CD4-positive, alpha-beta memory T cell (primary cell): ENCODE measurements at regions of chr3 and their contacts with region 1.

Region 1: DNA sequence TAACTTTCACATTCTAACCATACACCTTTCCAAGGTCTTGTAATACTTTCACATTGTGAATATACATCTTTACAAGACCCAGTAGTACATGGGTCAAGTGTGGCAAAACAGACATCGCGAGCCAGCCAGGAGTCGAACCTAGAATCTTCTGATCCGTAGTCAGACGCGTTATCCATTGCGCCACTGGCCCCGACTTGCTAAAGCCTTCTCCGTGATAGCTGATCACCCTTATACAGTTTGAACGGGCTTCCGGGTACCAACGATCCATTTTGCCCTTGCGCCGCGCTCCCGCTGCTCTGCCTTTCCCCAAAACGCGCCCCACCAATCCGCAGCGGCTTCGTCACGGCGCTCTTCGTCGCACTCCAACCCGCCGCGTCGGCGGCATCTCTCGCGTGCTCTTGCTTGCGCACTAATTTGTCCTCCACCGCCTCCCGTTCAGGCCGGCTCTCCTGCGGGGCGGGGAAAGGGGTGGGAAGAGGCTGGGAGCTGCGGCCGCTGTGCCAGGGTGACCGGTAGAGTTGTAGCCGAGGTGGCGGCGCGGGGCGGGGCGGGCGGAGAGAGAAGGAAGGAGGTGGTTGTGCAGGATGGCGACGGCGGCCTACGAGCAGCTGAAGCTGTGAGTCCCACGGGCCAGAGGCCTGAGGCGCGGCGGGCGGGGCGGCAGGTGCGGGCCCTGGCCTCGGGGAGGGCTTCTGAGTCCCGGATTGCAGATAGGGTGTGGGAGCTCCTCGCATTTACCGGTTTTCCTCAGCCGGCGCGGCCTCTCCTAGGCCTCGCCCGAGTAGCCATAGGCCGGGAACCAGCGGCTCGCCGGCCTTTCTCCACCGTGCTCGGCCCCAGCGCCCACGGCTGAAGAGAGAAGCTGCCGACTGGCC is at the start of gene SACM1L:
- DNase-seq: peak; percentile 96 to 97 (median 97)
- H3K4me3 ChIP-seq: peak within 1 kb of the TSS; percentile 84 to 97
- H3K4me3 Mint-ChIP-seq: peak within 1 kb of the TSS; percentile 86 to 99 (median 93)
- H3K27ac ChIP-seq: peak within 1 kb of the TSS; percentile 94
- H3K27ac Mint-ChIP-seq: peak within 1 kb of the TSS; percentile 91 to 100 (median 99)
- H3K4me1 ChIP-seq: peaks cover 47% of the 10 kb centered on the region
- H3K4me1 Mint-ChIP-seq: peaks cover 41 to 67% (median 56%) of the 10 kb centered on the region in 4 donors
- H3K27me3 ChIP-seq: no peaks in the 10 kb centered on the region
- H3K27me3 Mint-ChIP-seq: peaks cover 2 to 5% of the 10 kb centered on the region in 2 donors
- total RNA-seq, gene SACM1L: 95.7 to 104 TPM

Region 2: DNA sequence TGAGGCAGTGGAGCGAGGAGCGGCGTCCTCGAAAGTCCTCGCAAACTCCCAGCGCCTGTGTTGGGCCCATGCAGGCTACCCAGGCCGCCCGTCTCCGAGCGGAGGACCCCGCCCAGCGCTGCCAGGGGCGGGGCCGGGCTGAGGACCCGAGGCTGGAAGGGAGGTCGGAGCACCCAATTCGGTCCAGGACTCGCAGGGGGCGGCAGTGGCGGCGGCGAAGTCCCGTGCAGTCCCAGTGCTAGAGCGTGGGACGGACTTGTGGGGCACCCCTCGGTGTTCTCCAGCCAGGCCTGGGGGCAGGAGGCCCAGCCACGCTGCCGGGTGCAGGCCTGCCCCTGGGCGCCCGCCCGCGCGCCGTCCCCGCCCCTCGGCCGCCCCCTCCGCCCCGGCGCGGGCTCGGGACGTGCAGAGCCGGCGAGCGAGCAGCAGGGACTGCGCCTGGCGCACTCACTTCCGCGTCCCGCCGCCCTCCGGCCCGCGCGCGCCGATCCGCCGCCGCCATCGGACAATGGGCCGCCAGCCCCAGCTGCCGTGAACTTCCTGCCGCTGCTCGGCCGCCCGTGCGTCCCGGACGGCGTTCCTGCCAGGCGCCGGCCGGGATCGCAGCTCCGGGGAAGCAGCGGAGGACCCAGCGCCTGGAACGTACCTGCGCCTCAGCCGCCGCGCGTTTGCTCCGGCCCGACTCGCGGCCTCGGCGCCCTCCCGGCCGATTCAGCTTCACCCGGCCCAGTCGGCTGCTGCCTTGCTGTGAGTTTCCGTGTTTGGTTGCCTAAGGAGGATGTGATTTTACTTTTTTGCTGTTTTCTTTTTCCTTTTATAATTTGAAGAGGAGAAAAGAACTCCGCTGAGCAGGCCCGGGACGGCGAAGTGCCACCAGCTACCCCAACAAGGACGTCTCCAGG is 95.2 kb before region 1 on chr3:
- CTCF ChIA-PET with region 1: no interaction called
- POLR2A ChIA-PET with region 1: interaction called, 10 read pairs
- intact Hi-C with region 1: no loop called
- DNase-seq: peak; percentile 61 to 78 (median 67)
- H3K4me3 ChIP-seq: peak overlapping the region; percentile 70 to 76
- H3K4me3 Mint-ChIP-seq: peak overlapping the region; percentile 89 to 99 (median 94)
- H3K27ac ChIP-seq: peak overlapping the region; percentile 58
- H3K27ac Mint-ChIP-seq: peak overlapping the region; percentile 81 to 98 (median 90)
- H3K4me1 ChIP-seq: peaks cover 59% of the 10 kb centered on the region
- H3K4me1 Mint-ChIP-seq: peaks cover 42 to 60% (median 52%) of the 10 kb centered on the region in 4 donors
- H3K27me3 ChIP-seq: no peaks in the 10 kb centered on the region
- H3K27me3 Mint-ChIP-seq: no peaks in the 10 kb centered on the region

Region 3: DNA sequence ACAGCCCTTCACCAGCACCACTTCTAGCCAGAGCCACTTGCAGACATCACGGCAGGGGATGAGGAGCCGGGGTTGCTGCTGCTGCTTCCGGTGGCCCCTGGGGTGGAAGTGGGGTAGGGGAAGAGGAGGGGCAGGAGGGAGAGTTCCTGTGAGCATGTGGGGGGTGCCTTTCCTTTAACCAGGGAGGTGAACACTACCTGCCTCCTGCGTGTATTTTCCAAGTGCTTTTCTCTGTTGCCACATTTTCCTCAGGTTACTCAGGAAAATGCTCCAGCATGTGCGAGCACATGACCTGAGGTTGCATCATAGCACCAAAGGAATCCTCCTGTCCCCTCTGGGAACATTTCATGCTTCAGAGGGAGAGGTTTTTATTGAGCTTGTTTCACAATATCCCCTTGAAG is 12.1 kb before region 1 on chr3:
- CTCF ChIA-PET with region 1: interaction called, 8 read pairs
- POLR2A ChIA-PET with region 1: interaction called, 38 read pairs
- intact Hi-C with region 1: loop called (anchors 1 kb)
- DNase-seq: peak; percentile 62 to 79 (median 69)
- H3K4me3 ChIP-seq: peak overlapping the region in 1 of 2 donors; percentile 20
- H3K4me3 Mint-ChIP-seq: peak overlapping the region; percentile 38 to 85 (median 80)
- H3K27ac ChIP-seq: peak overlapping the region; percentile 57
- H3K27ac Mint-ChIP-seq: peak overlapping the region; percentile 92 to 97 (median 94)
- H3K4me1 ChIP-seq: peaks cover 27% of the 10 kb centered on the region
- H3K4me1 Mint-ChIP-seq: peaks cover 12 to 26% (median 17%) of the 10 kb centered on the region in 4 donors
- H3K27me3 ChIP-seq: no peaks in the 10 kb centered on the region
- H3K27me3 Mint-ChIP-seq: no peaks in the 10 kb centered on the region

Region 4: DNA sequence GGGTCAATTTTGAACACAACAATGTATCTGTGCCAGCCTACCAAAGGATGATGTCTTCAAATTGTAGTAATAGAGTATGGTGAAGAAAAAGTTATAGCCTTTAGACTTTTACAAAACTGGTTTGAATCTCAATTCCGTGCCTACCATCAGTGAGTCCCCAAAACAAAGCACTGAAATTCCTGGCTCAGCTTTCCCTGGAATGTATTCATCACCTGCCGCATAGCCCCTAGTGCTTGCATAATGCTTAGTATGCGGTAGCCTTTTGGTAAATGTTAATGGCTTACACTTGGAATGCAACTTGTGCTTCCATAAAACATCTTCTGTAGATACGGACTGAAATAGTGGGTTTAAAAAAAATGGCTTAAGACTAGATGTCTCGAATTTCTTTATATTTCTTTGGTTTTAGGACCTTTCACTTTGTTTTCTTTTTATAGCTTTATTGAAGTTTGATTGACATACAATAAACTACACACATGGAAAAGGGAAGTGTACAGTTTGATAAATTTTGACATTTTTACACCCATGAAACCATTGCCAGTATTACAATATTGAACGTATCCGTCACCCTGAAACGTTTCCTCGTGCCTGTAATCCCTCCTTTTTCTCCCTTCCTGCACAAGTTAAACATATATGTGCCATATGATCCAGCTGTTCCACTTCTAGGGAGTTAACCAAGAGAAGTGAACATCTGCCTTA is 12.2 kb after region 1 on chr3:
- CTCF ChIA-PET with region 1: interaction called, 3 read pairs
- POLR2A ChIA-PET with region 1: interaction called, 11 read pairs
- intact Hi-C with region 1: no loop called
- DNase-seq: no peak
- H3K4me3 ChIP-seq: no peak overlapping the region
- H3K4me3 Mint-ChIP-seq: peak overlapping the region in 1 of 8 donors; percentile 41
- H3K27ac ChIP-seq: no peak overlapping the region
- H3K27ac Mint-ChIP-seq: peak overlapping the region in 4 of 7 donors; percentile 19 to 58 (median 44)
- H3K4me1 ChIP-seq: peaks cover 56% of the 10 kb centered on the region
- H3K4me1 Mint-ChIP-seq: peaks cover 36 to 76% (median 57%) of the 10 kb centered on the region in 4 donors
- H3K27me3 ChIP-seq: no peaks in the 10 kb centered on the region
- H3K27me3 Mint-ChIP-seq: no peaks in the 10 kb centered on the region

Region 5: GRCh38 chr3:46065294-46065721 is 376.2 kb after region 1 on chr3:
- CTCF ChIA-PET with region 1: no interaction called
- POLR2A ChIA-PET with region 1: interaction called, 4 read pairs
- intact Hi-C with region 1: loop called (anchors 5 kb)
- DNase-seq: peak; percentile 88 to 99 (median 93)
- H3K4me3 ChIP-seq: no peak overlapping the region
- H3K4me3 Mint-ChIP-seq: peak overlapping the region; percentile 58 to 86 (median 78)
- H3K27ac ChIP-seq: peak overlapping the region; percentile 47
- H3K27ac Mint-ChIP-seq: peak overlapping the region; percentile 86 to 96 (median 94)
- H3K4me1 ChIP-seq: peaks cover 77% of the 10 kb centered on the region
- H3K4me1 Mint-ChIP-seq: peaks cover 52 to 88% (median 68%) of the 10 kb centered on the region in 4 donors
- H3K27me3 ChIP-seq: no peaks in the 10 kb centered on the region
- H3K27me3 Mint-ChIP-seq: no peaks in the 10 kb centered on the region